ENCODE measurements at regions of chr14 and their contacts with region 1.

Region 1: DNA sequence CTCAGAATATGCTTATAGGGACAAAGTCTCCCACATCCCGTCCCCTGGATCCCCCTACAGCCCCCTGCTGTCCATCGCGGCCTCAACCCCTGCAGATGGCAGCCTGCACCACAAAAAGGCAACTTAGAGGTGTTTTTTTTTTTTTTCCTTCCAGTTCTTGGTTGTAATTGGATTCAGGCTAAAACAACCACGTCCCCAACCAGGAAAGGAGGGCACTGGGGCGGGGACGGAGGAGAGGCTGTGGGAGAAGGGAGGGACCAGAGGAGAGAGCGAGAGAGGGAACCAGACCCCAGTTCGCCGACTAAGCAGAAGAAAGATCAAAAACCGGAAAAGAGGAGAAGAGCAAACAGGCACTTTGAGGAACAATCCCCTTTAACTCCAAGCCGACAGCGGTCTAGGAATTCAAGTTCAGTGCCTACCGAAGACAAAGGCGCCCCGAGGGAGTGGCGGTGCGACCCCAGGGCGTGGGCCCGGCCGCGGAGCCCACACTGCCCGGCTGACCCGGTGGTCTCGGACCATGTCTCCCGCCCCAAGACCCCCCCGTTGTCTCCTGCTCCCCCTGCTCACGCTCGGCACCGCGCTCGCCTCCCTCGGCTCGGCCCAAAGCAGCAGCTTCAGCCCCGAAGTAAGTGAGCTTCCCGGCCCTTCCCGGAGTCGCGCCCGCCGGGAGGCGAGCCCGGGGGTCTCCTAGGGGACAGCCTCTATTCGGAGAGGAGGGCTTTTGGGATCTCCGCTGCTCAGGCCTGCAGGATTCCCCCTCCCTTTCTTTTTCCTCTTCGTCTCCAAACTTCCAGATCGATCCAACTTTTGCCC is at the start of gene MMP14:
- DNase-seq: peak; percentile 81
- H3K4me3 ChIP-seq: peak within 1 kb of the TSS; percentile 83
- H3K27me3 ChIP-seq: no peaks in the 10 kb centered on the region
- CTCF ChIP-seq: peak; percentile 69
- polyA plus RNA-seq, gene MMP14: 327 and 592 TPM in 2 replicates

Region 2: GRCh38 chr14:22822571-22823098 is 13.9 kb before region 1 on chr14:
- CTCF ChIA-PET with region 1: interaction called, 86 read pairs
- POLR2A ChIA-PET with region 1: interaction called, 5 read pairs
- DNase-seq: peak; percentile 54
- H3K4me3 ChIP-seq: peak overlapping the region; percentile 28
- H3K27me3 ChIP-seq: no peaks in the 10 kb centered on the region
- CTCF ChIP-seq: peak; percentile 90

Measured in BJ (cell line).